ENCODE measurements at regions of chr9 and their contacts with region 1.

Region 1: GRCh38 chr9:6566409-6567139 is 79.0 kb downstream of the GLDC start:
- DNase-seq: peak in 1 of 4 donors; percentile 12
- ATAC-seq: no peak
- H3K4me3 ChIP-seq: no peak overlapping the region
- H3K27ac ChIP-seq: no peak overlapping the region
- H3K4me1 ChIP-seq: no peaks in the 10 kb centered on the region
- H3K27me3 ChIP-seq: no peaks in the 10 kb centered on the region
- CTCF ChIP-seq: no peak
- POLR2A ChIP-seq: no peak

Region 2: DNA sequence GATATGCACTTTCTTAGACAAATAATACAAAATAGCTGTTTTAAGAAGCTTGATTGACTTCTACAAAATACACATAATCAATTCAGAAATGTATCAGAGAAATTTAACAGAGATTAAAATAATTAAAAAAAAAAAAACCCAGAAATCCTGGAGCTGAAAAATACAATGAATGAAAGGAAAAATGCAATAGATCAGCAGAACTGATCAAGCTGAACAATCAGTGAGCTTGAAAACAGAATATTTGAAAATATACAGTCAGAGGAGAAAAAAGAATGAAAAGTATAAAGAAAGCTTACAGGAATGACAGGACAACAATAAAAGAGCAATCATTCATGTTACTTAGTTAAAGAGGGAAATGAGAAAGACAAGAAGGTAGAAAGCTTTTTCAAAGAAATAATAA is 392.7 kb before region 1 on chr9:
- intact Hi-C with region 1: no loop called
- DNase-seq: no peak
- ATAC-seq: no peak
- H3K4me3 ChIP-seq: no peak overlapping the region
- H3K27ac ChIP-seq: no peak overlapping the region
- H3K4me1 ChIP-seq: no peaks in the 10 kb centered on the region
- H3K27me3 ChIP-seq: no peaks in the 10 kb centered on the region
- CTCF ChIP-seq: no peak
- POLR2A ChIP-seq: no peak

Region 3: DNA sequence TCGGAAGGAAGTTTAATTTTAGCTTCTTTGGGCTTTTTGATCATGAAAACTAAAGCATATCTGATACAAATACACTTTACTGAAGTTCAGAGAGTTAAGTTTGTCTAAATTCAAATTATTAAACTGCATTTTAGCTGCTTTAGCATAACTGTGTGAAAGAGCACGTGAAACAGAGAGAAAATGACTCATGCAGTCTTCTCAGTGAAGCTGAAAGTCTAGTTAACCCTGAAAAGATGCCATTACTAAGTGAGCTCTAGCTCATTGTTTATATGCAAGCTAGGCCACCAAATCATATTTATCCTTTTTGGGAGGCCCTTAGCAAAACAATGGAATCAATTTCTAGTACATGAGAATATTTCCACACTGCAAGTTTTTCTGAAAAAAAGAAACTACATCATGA is 210.8 kb before region 1 on chr9:
- intact Hi-C with region 1: loop called (anchors 5 kb)
- DNase-seq: no peak
- ATAC-seq: no peak
- H3K4me3 ChIP-seq: no peak overlapping the region
- H3K27ac ChIP-seq: no peak overlapping the region
- H3K4me1 ChIP-seq: no peaks in the 10 kb centered on the region
- H3K27me3 ChIP-seq: no peaks in the 10 kb centered on the region
- CTCF ChIP-seq: no peak
- POLR2A ChIP-seq: no peak

Measured in body of pancreas (tissue), 4 donors.